ENCODE measurements at regions of chr2 and their contacts with region 1.

Region 1: GRCh38 chr2:147989809-147990403 is 30.6 kb downstream of the ORC4 start:
- DNase-seq: peak; percentile 17 to 71
- H3K4me3 ChIP-seq: no peak overlapping the region
- H3K4me1 ChIP-seq: no peaks in the 10 kb centered on the region
- H3K27me3 ChIP-seq: no peaks in the 10 kb centered on the region

Region 2: GRCh38 chr2:148509288-148509902 is 519.5 kb after region 1 on chr2:
- in situ Hi-C with region 1: loop called (anchors 25 kb)
- DNase-seq: peak; percentile 86 to 92
- H3K4me3 ChIP-seq: peak overlapping the region; percentile 15
- H3K4me1 ChIP-seq: peaks cover 5% of the 10 kb centered on the region
- H3K27me3 ChIP-seq: no peaks in the 10 kb centered on the region

Region 3: GRCh38 chr2:148926291-148926961 is 936.5 kb after region 1 on chr2:
- in situ Hi-C with region 1: no loop called
- DNase-seq: peak; percentile 70
- H3K4me3 ChIP-seq: no peak overlapping the region
- H3K4me1 ChIP-seq: peaks cover 20% of the 10 kb centered on the region
- H3K27me3 ChIP-seq: no peaks in the 10 kb centered on the region

Measured in HAP-1 (cell line).